Activated CD8-positive, alpha-beta T cell treated with anti-CD3 and anti-CD28 coated beads for 36 hours (primary cell): ENCODE measurements at regions of chr7 and their contacts with region 1.

Region 1: DNA sequence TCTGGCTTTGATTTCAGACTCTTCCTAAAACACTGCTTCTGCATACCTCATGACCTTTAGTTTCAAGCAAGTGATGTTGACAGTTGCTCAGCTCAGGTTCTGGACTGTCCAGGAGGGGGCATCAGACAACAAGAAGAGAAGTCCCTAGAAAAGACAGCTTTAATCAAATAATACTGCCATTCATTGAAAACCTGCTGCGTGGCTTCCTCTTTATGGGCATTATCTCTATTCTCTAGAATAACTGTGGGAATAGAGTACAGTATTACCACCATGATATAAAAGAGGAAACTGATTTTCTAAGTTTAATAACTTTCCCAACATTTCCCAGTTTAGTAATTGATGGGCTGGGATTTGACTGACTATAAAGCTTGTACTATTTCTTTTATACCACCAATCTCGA is 170.4 kb downstream of the SNX13 start:
- DNase-seq: peak; percentile 80
- ATAC-seq: peak; percentile 64
- H3K4me3 Mint-ChIP-seq: no peak overlapping the region
- H3K27ac Mint-ChIP-seq: no peak overlapping the region
- H3K4me1 Mint-ChIP-seq: peaks cover 7% of the 10 kb centered on the region
- H3K27me3 Mint-ChIP-seq: no peaks in the 10 kb centered on the region
- CTCF ChIP-seq: peak; percentile 70

Region 2: DNA sequence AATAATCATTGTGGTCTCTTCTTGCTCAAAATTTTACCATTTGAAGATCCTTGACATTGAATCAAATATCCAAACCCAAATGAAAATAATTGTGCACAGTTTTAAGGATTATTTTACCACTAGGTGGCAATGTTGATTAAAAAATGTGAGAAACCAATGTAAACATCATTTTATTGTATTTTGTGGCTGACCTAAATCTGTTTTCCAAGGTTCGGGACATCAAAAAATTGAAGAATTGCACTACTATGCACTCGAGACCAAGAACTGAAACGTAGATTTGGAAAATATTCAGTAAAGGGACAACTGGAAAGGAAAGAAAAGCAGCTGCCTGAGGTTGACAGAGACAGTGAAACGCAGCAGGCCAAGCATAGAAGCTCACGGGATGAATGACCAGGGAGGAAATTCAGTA is 89.0 kb before region 1 on chr7:
- CTCF ChIA-PET with region 1: interaction called, 10 read pairs
- POLR2A ChIA-PET with region 1: no interaction called
- intact Hi-C with region 1: no loop called
- DNase-seq: no peak
- ATAC-seq: no peak
- H3K4me3 Mint-ChIP-seq: no peak overlapping the region
- H3K27ac Mint-ChIP-seq: no peak overlapping the region
- H3K4me1 Mint-ChIP-seq: no peaks in the 10 kb centered on the region
- H3K27me3 Mint-ChIP-seq: no peaks in the 10 kb centered on the region
- CTCF ChIP-seq: peak; percentile 74

Region 3: GRCh38 chr7:17743316-17743715 is 26.6 kb before region 1 on chr7:
- CTCF ChIA-PET with region 1: no interaction called
- POLR2A ChIA-PET with region 1: no interaction called
- intact Hi-C with region 1: no loop called
- DNase-seq: no peak
- ATAC-seq: no peak
- H3K4me3 Mint-ChIP-seq: no peak overlapping the region
- H3K27ac Mint-ChIP-seq: no peak overlapping the region
- H3K4me1 Mint-ChIP-seq: no peaks in the 10 kb centered on the region
- H3K27me3 Mint-ChIP-seq: no peaks in the 10 kb centered on the region
- CTCF ChIP-seq: no peak

Region 4: DNA sequence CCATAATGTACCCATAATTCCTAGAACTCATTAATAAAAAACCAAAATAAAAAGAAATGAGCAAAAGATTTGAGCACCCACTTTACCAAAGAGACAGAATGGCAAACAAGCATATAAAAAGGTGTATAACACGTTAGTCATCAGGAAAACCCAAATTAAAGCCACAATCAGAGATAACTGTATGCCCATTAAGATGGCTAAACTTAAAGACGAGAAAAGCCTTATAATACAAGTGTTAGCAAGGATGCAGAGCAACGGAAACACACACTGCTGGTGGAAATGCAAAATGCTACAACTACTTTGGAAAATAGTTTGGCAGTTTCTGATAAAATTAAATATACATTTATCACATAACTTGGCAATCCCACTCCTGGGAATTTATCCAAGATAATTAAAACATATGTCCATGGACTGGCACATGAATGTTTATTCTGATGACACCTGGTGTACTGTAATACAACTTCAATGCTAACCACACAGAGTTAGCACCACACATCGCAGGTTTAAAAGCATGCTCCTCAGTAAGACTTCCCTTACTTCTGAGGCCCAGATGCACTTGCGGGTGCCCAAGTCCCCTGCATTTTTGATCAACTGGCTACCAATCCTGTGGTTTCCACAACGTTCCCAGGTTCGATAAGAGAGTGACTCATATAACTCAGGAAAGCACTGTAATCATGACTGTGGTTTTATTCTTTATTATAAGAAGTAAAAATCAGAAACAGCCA is 11.7 kb after region 1 on chr7:
- CTCF ChIA-PET with region 1: interaction called, 10 read pairs
- POLR2A ChIA-PET with region 1: no interaction called
- intact Hi-C with region 1: no loop called
- DNase-seq: no peak
- ATAC-seq: no peak
- H3K4me3 Mint-ChIP-seq: no peak overlapping the region
- H3K27ac Mint-ChIP-seq: no peak overlapping the region
- H3K4me1 Mint-ChIP-seq: peaks cover 2% of the 10 kb centered on the region
- H3K27me3 Mint-ChIP-seq: no peaks in the 10 kb centered on the region
- CTCF ChIP-seq: no peak

Region 5: DNA sequence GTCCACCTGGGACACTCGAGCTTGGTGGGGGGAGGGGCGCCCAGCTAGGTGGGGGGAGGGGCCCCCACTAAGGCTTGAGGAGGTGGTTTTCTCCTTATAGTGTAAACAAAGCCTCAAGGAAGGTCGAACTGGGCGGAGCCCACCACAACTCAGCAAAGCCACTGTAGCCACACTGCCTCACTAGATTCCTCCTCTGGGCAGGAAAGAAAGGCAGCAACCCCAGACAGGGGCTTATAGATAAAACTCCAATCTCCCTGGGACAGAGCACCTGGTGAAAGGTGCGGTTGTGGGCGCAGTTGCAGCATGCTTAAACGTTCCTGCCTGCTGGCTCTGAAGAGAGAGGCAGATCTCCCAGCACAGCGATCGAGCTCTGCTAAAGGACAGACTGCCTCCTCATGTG is 37.3 kb after region 1 on chr7:
- CTCF ChIA-PET with region 1: no interaction called
- POLR2A ChIA-PET with region 1: no interaction called
- intact Hi-C with region 1: no loop called
- DNase-seq: no peak
- ATAC-seq: no peak
- H3K4me3 Mint-ChIP-seq: no peak overlapping the region
- H3K27ac Mint-ChIP-seq: no peak overlapping the region
- H3K4me1 Mint-ChIP-seq: peaks cover 8% of the 10 kb centered on the region
- H3K27me3 Mint-ChIP-seq: no peaks in the 10 kb centered on the region
- CTCF ChIP-seq: no peak

Region 6: GRCh38 chr7:17991866-17992648 is 222.1 kb after region 1 on chr7:
- CTCF ChIA-PET with region 1: interaction called, 56 read pairs
- POLR2A ChIA-PET with region 1: no interaction called
- intact Hi-C with region 1: no loop called
- DNase-seq: peak; percentile 52
- ATAC-seq: no peak
- H3K4me3 Mint-ChIP-seq: no peak overlapping the region
- H3K27ac Mint-ChIP-seq: no peak overlapping the region
- H3K4me1 Mint-ChIP-seq: no peaks in the 10 kb centered on the region
- H3K27me3 Mint-ChIP-seq: no peaks in the 10 kb centered on the region
- CTCF ChIP-seq: peak; percentile 38

Region 7: DNA sequence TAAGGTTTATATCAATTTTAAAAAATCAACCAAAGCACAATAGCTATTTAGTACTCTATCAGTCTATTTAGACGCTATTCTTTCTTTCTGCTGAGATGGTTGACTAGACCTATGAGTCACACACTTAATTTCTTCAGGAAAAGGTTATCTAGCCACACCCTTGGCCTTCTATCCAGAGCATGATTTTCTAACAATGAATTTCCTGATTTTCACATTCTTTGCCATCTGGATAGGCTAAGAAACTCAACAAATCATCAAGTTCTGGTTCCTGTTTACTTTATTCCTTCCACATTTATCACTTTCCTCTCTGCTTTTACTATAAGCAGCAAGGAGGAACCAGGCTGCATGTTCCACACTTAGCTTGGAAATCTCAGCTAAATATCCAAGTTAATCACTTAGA is 249.7 kb after region 1 on chr7:
- CTCF ChIA-PET with region 1: no interaction called
- POLR2A ChIA-PET with region 1: no interaction called
- intact Hi-C with region 1: no loop called
- DNase-seq: no peak
- ATAC-seq: no peak
- H3K4me3 Mint-ChIP-seq: no peak overlapping the region
- H3K27ac Mint-ChIP-seq: no peak overlapping the region
- H3K4me1 Mint-ChIP-seq: no peaks in the 10 kb centered on the region
- H3K27me3 Mint-ChIP-seq: peaks cover 10% of the 10 kb centered on the region
- CTCF ChIP-seq: no peak

Region 8: DNA sequence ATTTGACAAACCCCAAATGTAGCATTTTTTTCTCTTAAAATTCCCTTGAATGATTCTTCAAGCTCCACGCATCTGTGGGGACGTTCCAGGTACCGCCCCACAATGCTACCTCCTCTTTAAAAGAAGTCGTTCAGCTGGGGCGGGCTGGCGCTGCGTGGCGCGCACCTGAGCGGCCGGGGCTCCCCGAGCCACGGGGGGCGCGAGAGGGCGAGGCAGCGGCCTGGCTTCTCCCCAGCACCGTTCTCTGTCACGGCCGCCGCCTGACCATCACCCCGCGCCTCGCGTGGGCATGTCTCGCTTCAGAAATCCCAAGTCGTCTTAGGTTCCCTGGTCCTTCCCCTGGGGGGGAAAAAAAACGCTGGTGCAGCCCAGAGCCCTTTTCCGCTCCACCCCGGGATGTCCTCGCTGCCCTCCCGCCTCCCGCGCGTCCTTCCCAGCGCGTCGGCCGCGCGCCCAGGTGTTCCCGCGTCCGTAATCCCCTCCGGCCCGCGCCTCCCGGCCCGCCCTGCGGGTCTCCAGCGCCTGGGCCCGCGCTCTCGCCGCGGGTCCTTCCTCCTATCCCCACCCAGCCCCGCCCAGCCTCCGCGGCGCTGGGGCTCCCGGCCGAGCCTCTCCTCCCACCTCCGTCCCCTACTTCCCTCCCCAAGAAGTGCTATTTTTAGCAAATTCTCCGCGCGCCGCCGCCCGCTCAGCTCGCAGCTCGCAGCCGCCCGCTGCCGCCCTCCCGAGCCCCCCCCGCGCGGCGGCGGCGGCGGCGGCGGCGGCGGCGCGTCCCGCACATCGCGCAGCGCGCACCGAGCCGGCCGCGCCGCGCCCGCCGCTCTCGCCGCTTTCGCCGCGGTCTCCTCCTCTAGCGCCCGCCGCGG is 316.5 kb after region 1 on chr7:
- CTCF ChIA-PET with region 1: interaction called, 6 read pairs
- POLR2A ChIA-PET with region 1: no interaction called
- intact Hi-C with region 1: loop called (anchors 10 kb)
- DNase-seq: peak; percentile 5
- ATAC-seq: peak; percentile 27
- H3K4me3 Mint-ChIP-seq: peak overlapping the region; percentile 52
- H3K27ac Mint-ChIP-seq: no peak overlapping the region
- H3K4me1 Mint-ChIP-seq: peaks cover 4% of the 10 kb centered on the region
- H3K27me3 Mint-ChIP-seq: peaks cover 34% of the 10 kb centered on the region
- CTCF ChIP-seq: no peak

Region 9: DNA sequence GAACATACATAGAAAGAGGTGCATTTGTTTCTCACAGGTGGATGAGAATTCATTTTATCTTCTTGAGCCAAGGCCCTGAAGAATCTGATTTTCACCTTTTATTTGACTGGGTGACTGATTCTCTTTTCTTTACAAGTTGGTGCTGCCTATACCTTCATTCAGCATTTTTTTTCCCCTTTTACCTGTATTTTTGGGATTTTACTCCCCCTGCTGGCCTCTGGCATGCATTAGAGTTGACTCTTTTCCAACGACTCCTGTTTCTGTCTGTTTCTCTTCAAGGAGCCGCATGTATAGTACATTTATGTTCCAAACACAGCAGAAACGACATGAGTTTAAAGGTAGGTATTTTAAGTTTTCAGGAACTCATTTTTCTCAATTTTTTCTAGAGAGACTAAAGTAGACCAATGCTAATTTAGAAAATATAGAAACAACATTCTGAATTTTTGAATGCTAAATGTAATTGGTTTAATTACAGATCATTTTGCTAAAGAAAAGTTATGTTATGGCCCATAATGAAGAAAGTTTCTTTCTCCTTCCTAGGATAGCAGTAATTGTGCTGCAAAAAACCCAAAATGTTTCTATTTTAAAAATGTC is 575.8 kb after region 1 on chr7:
- CTCF ChIA-PET with region 1: interaction called, 13 read pairs
- POLR2A ChIA-PET with region 1: no interaction called
- intact Hi-C with region 1: no loop called
- DNase-seq: peak; percentile 46
- ATAC-seq: peak; percentile 61
- H3K4me3 Mint-ChIP-seq: no peak overlapping the region
- H3K27ac Mint-ChIP-seq: no peak overlapping the region
- H3K4me1 Mint-ChIP-seq: no peaks in the 10 kb centered on the region
- H3K27me3 Mint-ChIP-seq: peaks cover 1% of the 10 kb centered on the region
- CTCF ChIP-seq: peak; percentile 75